ENCODE measurements at regions of chr4 and their contacts with region 1.

Region 1: DNA sequence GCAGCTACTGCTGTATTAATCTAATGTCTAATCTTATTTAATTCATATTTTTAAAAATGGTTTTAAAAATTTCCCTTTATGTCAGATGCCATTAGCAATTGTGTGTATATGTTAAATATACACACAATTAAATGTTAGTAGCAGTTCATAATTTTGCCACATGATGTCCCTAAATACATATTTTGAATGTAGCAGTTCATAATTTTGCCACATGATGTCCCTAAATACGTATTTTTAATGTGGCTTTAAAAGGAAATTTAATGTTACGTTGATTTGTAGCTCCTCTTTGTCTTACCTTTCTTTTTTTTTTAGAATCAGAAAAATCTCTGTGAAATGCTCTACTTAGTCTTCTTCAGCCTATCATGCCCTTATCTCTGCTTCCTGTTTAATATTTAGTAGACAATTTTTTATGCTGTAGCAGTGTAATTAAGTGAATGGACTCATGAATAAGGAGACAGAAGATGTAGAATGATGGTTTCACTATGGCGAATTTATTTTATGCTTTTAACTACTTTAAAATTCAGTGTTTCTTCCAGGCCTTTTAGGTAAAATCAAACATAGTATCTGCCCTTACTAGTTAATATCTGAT is 26.1 kb downstream of the RBM46 start:
- DNase-seq: no peak
- ATAC-seq: no peak

Region 2: GRCh38 chr4:154928640-154929257 is 121.6 kb after region 1 on chr4:
- intact Hi-C with region 1: loop called (anchors 10 kb)
- DNase-seq: no peak
- ATAC-seq: no peak